ENCODE measurements at regions of chr16 and their contacts with region 1.

Region 1: DNA sequence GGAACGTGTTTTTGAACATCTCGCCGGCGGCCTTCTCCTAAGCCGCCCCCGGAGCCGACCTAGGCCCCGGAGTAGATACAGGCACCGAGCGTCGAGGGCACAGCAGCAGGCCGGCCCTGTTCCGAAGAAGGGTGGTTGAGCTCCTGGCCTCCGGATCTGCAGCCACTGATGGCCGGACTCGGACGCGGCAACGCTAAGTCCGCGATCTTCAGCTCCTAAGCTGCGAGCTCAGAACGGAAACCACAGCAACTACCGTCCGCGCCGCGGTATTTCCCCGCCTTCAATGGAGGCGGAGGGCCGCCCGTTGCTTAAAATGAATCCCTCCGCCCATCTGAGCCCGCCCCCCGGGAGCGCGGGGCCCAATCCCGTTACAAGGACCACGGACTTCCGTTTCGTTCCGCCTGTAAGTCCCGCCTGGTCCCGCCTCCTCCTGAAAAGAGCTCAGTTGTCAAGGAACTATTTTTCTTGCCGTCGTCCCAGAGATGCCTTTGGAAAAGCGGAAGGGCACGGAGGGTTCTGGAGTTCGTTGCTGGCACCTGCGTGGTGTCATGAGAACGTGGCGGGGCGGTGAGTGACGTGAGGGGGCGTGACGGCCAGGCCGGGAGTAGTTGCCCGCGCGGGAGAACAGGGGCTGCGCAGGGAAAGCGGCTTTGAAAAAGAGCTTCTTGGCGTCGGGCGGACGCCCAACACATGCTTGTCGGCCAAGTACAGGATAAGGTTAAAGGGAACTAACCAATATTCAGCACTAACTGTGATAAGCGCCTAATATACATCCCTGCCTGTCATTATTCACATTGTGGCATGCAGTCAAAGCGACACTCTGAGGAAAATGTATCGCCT is at the start of gene CFAP20:
- DNase-seq: peak; percentile 98
- ATAC-seq: peak; percentile 87
- H3K4me3 ChIP-seq: peak within 1 kb of the TSS; percentile 85
- H3K27ac ChIP-seq: peak within 1 kb of the TSS; percentile 82
- H3K4me1 ChIP-seq: peaks cover 9% of the 10 kb centered on the region
- H3K27me3 ChIP-seq: no peaks in the 10 kb centered on the region
- CTCF ChIP-seq: no peak
- EP300 ChIP-seq: 0 out of 4 replicates have a peak, but pooled peaks of 1 of the 2 experiments have one; percentile 7
- POLR2A ChIP-seq: peak; percentile 97
- RAD21 ChIP-seq: no peak
- polyA plus RNA-seq, gene CFAP20: 10.9 to 19.9 TPM

Region 2: GRCh38 chr16:57899771-57900661 is 229.3 kb before region 1 on chr16:
- CTCF ChIA-PET with region 1: interaction called, 3 read pairs
- POLR2A ChIA-PET with region 1: no interaction called
- RAD21 ChIA-PET with region 1: interaction called, 5 read pairs
- SMC1A ChIA-PET with region 1: no interaction called
- in situ Hi-C with region 1: no loop called
- intact Hi-C with region 1: loop called (anchors 5 kb)
- DNase-seq: no peak
- ATAC-seq: peak; percentile 88
- H3K4me3 ChIP-seq: no peak overlapping the region
- H3K27ac ChIP-seq: no peak overlapping the region
- H3K4me1 ChIP-seq: no peaks in the 10 kb centered on the region
- H3K27me3 ChIP-seq: peaks cover 0 to 1% of the 10 kb centered on the region in 2 experiments; a peak in 1 of 4 replicates
- CTCF ChIP-seq: peak; percentile 84 to 88 (median 87)
- EP300 ChIP-seq: no peak
- POLR2A ChIP-seq: no peak
- RAD21 ChIP-seq: peak; percentile 75

Region 3: DNA sequence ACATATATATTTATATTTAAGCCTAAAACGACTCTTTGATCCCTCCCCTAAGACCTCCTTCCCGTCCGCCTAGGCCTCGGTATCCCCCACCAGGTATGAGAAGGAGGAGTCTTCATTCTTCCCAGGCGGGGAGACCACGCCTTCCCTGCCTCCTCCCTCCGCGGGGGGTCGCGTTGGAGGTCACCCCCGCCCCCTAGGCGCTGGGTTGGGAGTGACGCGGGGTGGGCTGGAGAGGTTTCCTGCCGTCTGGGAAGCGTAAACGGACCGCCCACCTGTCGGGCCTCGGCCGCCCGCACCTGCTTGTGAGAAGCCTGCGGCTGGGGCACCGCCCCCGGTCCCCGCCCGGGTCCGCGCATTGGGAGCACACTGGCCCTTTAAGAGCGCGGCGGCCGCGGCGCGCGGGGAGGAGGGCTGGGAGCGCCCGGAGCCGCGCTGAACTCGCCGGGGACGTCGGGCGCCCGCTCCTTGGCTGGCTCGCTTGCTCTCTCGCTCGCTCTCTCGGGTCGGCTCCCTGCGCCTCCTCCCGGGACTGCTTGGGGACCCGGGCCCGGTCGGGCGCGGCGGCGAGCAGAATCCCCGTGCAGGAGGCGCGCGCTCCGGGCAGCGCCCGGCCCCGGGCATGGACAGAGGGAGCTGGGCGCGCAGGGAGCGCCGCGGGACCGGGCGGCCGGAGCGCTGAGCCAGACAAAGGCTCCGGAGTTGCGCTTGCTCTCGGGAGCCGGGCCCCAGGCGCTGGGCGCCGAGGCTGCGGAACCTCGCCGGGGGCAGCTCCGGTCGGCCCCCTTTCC is 103.8 kb before region 1 on chr16 and contains the start of gene MMP15:
- CTCF ChIA-PET with region 1: interaction called, 21 read pairs
- POLR2A ChIA-PET with region 1: interaction called, 3 read pairs
- RAD21 ChIA-PET with region 1: interaction called, 5 read pairs
- SMC1A ChIA-PET with region 1: interaction called, 10 read pairs
- in situ Hi-C with region 1: loop called (anchors 5 kb)
- intact Hi-C with region 1: loop called (anchors 2 kb)
- DNase-seq: no peak
- ATAC-seq: peak; percentile 80
- H3K4me3 ChIP-seq: peak within 1 kb of the TSS; percentile 67
- H3K27ac ChIP-seq: no peak within 1 kb of the TSS
- H3K4me1 ChIP-seq: no peaks in the 10 kb centered on the region; the same call in 1 of the 2 replicates
- H3K27me3 ChIP-seq: peaks cover 11 to 13% of the 10 kb centered on the region in 2 experiments
- CTCF ChIP-seq: no peak
- EP300 ChIP-seq: no peak
- POLR2A ChIP-seq: no peak
- RAD21 ChIP-seq: no peak
- polyA plus RNA-seq, gene MMP15: not detected

Region 4: DNA sequence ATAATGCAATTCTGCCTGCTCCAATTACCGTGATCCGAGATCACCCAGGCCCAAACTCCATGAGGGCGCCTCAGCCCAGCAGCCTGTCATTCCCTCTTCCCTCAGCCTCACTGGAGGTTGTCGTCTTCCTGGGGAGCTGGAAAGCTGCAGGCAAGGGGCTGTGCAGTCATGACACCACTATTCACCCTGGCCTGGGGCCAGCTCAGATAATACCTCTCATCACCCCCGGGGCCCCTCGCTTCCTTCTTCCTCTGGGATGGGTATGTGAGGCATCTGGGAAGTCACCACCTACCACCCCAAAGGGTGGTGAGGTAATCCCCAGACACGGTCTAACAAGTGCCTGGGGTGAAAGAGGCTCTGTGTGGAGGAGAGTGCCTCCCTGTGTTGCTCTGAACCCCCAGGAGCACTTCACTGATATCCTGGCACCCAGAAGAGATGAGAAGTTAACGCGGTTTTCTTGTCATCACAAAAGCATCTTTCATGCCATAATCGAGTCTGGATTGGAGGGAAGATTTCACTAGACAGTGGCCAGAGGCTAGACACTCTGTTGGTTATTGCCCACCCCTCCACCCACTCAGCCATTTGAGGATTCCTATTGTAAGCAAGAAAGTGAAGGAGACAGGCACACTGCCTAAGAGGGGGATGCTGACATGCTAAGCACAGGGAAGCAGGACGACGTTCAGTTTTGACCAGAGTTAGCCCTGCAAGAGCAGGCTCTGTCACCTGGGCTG is 18.6 kb before region 1 on chr16:
- CTCF ChIA-PET with region 1: interaction called, 16 read pairs
- POLR2A ChIA-PET with region 1: interaction called, 4 read pairs
- RAD21 ChIA-PET with region 1: interaction called, 7 read pairs
- SMC1A ChIA-PET with region 1: interaction called, 5 read pairs
- in situ Hi-C with region 1: no loop called
- intact Hi-C with region 1: no loop called
- DNase-seq: no peak
- ATAC-seq: no peak; the same call in 1 of the 3 replicates
- H3K4me3 ChIP-seq: no peak overlapping the region
- H3K27ac ChIP-seq: no peak overlapping the region
- H3K4me1 ChIP-seq: peaks cover 3% of the 10 kb centered on the region; the same call in 1 of the 2 replicates
- H3K27me3 ChIP-seq: no peaks in the 10 kb centered on the region
- CTCF ChIP-seq: no peak
- EP300 ChIP-seq: no peak
- POLR2A ChIP-seq: no peak
- RAD21 ChIP-seq: no peak

Region 5: DNA sequence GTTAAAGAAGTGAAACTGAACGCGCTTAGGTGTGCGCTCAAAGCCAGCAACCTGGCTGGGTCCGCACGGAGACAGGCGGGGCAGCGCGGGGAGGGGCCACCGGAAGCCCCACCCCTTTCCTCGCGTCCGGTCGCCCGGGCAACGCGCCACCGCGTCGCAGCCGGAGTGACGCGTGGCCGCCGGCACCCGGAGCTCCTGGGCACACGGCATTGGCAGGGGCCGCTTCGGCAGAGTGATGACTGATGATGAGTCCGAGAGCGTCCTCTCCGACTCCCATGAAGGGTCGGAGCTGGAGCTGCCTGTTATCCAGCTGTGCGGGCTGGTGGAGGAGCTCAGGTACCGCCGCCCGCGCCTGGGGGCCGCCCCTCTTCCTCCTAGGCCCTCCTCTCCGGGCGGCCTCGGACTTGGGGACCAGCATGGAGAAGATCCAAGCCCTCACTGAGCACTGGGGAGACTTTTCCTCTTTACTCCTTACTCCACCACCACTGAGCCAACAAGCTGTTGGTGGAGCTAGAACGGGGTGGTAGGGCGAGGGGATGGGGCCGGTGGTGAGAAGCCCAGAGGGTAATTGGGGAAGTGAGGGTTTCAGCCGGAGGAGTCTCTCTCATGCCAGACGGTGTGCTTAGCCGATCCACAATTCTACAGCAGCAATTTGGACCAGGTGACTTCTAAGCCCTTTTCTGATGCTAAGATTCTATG is 120.6 kb after region 1 on chr16:
- CTCF ChIA-PET with region 1: interaction called, 19 read pairs
- POLR2A ChIA-PET with region 1: no interaction called
- RAD21 ChIA-PET with region 1: interaction called, 21 read pairs
- SMC1A ChIA-PET with region 1: interaction called, 8 read pairs
- in situ Hi-C with region 1: no loop called
- intact Hi-C with region 1: loop called (anchors 2 kb)
- DNase-seq: peak; percentile 40
- ATAC-seq: peak; percentile 86
- H3K4me3 ChIP-seq: peak overlapping the region; percentile 84
- H3K27ac ChIP-seq: 0 out of 2 replicates have a peak overlapping the region, but pooled peaks have one; percentile 1
- H3K4me1 ChIP-seq: peaks cover 18% of the 10 kb centered on the region
- H3K27me3 ChIP-seq: no peaks in the 10 kb centered on the region
- CTCF ChIP-seq: no peak
- EP300 ChIP-seq: no peak
- POLR2A ChIP-seq: peak; percentile 78
- RAD21 ChIP-seq: no peak

Region 6: GRCh38 chr16:58292886-58293285 is 163.6 kb after region 1 on chr16:
- CTCF ChIA-PET with region 1: no interaction called
- POLR2A ChIA-PET with region 1: no interaction called
- RAD21 ChIA-PET with region 1: no interaction called
- SMC1A ChIA-PET with region 1: no interaction called
- in situ Hi-C with region 1: no loop called
- intact Hi-C with region 1: no loop called
- DNase-seq: no peak
- ATAC-seq: no peak
- H3K4me3 ChIP-seq: no peak overlapping the region
- H3K27ac ChIP-seq: no peak overlapping the region
- H3K4me1 ChIP-seq: no peaks in the 10 kb centered on the region
- H3K27me3 ChIP-seq: no peaks in the 10 kb centered on the region
- CTCF ChIP-seq: no peak
- EP300 ChIP-seq: no peak
- POLR2A ChIP-seq: no peak
- RAD21 ChIP-seq: no peak

Region 7: GRCh38 chr16:58537124-58537906 is 408.0 kb after region 1 on chr16:
- CTCF ChIA-PET with region 1: no interaction called
- POLR2A ChIA-PET with region 1: no interaction called
- RAD21 ChIA-PET with region 1: no interaction called
- SMC1A ChIA-PET with region 1: no interaction called
- in situ Hi-C with region 1: no loop called
- intact Hi-C with region 1: no loop called
- DNase-seq: no peak
- ATAC-seq: no peak
- H3K4me3 ChIP-seq: no peak overlapping the region
- H3K27ac ChIP-seq: no peak overlapping the region
- H3K4me1 ChIP-seq: no peaks in the 10 kb centered on the region
- H3K27me3 ChIP-seq: no peaks in the 10 kb centered on the region
- CTCF ChIP-seq: no peak
- EP300 ChIP-seq: no peak
- POLR2A ChIP-seq: no peak
- RAD21 ChIP-seq: no peak

Region 8: DNA sequence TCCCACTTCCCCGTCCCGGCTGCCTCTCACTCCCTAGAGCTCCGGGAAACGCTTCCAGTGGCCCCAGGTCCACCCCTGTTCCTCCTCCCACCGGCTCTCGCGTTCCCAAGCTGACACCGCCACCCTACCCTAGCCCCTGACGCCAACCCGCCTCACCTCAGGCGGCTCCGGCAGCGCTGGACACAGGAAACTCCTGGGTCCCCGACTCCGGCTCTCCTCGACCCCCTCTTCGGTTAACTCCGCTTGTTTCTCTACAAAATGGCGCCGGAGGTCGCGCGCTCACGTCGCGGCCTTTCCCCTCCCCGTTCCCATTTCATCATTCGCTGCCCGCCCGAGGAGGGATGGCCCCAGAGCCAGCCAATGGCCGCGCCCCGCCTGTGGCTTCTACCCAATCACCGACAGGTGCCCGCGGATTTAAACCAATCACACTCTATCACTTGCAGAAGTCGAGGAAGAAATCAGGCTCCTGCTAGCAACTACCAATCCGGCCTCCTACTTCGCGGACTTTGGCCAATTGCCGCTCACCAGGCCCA is 500.3 kb after region 1 on chr16 and contains the start of gene CNOT1:
- CTCF ChIA-PET with region 1: no interaction called
- POLR2A ChIA-PET with region 1: no interaction called
- RAD21 ChIA-PET with region 1: no interaction called
- SMC1A ChIA-PET with region 1: no interaction called
- in situ Hi-C with region 1: no loop called
- intact Hi-C with region 1: loop called (anchors 2 kb)
- DNase-seq: peak; percentile 97
- ATAC-seq: peak; percentile 89
- H3K4me3 ChIP-seq: peak within 1 kb of the TSS; percentile 85
- H3K27ac ChIP-seq: peak within 1 kb of the TSS; percentile 96
- H3K4me1 ChIP-seq: no peaks in the 10 kb centered on the region; the same call in 1 of the 2 replicates
- H3K27me3 ChIP-seq: no peaks in the 10 kb centered on the region
- CTCF ChIP-seq: no peak
- EP300 ChIP-seq: no peak
- POLR2A ChIP-seq: peak; percentile 88
- RAD21 ChIP-seq: no peak
- polyA plus RNA-seq, gene CNOT1: 101 to 131 TPM